Adrenal gland (tissue), 19 donors: ENCODE measurements at regions of chr12 and their contacts with region 1.

Region 1: GRCh38 chr12:21604245-21605101 is at the start of gene GYS2:
- DNase-seq: no peak
- H3K4me3 ChIP-seq: no peak within 1 kb of the TSS
- H3K27ac ChIP-seq: no peak within 1 kb of the TSS
- H3K4me1 ChIP-seq: no peaks in the 10 kb centered on the region
- H3K27me3 ChIP-seq: no peaks in the 10 kb centered on the region
- CTCF ChIP-seq: no peak
- POLR2A ChIP-seq: no peak
- total RNA-seq, gene GYS2: 0.06 to 0.23 TPM in 2 of 9 donors, not detected in the others

Region 2: DNA sequence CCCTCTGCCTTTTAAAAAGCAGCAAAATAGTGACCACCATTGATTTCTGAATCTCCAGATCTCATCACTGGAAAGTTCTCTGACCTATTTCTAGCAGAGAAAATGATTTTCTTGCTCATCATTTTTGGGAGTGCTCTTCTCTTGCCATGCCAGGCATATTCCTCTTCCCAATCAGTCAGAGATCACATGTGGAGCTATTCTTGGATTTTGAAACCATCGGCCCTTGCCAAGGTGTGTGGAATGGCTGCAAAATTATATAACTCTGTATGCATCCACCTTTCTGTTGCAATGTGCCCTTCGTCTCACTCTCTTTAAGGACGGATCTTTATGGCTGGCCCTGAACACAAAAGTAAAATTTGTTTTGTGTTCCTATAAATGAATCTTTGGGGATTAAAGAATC is 78.6 kb after region 1 on chr12:
- intact Hi-C with region 1: loop called in 1 of 2 experiments (anchors 5 kb)
- DNase-seq: no peak
- H3K4me3 ChIP-seq: no peak overlapping the region
- H3K27ac ChIP-seq: no peak overlapping the region
- H3K4me1 ChIP-seq: no peaks in the 10 kb centered on the region
- H3K27me3 ChIP-seq: no peaks in the 10 kb centered on the region
- CTCF ChIP-seq: no peak
- POLR2A ChIP-seq: no peak